Heart right ventricle (tissue), 16 donors: ENCODE measurements at regions of chr3 and their contacts with region 1.

Region 1: DNA sequence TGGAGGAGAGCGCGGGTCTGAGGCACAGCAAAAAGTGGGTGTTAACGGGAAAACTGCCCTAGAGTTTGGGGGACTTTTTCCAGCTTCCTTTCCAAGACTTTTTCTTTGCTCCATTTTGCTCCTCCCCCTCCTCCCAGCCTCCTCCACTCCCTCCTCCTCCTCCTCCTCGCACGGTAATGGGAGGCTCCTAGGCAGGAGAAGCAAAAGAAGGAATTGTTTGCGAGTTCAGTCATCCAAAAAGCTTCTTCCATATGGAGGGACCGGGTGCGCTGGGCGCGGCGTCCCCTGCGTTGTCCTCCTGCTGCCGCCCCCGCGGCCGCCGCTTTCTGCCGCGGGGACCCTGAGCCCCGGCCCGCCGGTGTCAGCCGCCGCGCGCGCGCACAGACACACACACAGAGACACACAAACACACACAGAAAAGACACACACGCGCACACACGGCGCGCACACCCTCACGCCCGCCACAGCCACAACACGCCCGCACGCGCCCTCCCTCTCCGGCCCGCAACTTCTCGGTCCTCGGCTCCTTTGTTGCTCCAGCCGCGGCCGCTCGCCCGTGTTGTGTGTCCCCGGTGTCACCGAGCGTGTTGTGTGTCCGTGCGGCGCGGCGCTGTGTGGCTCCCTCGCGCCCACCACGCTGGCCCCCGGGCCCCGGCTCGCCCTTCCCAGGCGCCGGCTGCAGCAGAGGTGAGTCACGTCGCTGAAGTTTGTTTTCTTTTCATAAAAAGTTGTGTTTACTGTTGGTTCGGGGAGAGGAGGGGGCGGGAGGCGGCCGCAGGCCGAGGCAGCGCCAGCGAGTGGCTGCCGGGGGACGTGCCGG is at the start of gene BOC:
- DNase-seq: peak; percentile 38 to 46
- ATAC-seq: peak; percentile 77 to 89 (median 82)
- H3K4me3 ChIP-seq: peak within 1 kb of the TSS; percentile 38 to 83 (median 70)
- H3K27ac ChIP-seq: peak within 1 kb of the TSS; percentile 77 to 90 (median 86)
- H3K4me1 ChIP-seq: peaks cover 0 to 37% (median 4%) of the 10 kb centered on the region in 9 donors
- H3K27me3 ChIP-seq: peaks cover 0 to 68% (median 30%) of the 10 kb centered on the region in 7 donors
- CTCF ChIP-seq: no peak
- total RNA-seq, gene BOC: 2.9 to 13.9 (median 5.4) TPM

Region 2: GRCh38 chr3:113051302-113051711 is 160.2 kb before region 1 on chr3:
- intact Hi-C with region 1: loop called in 1 of 10 experiments (anchors 5 kb)
- DNase-seq: peak; percentile 60 to 89
- ATAC-seq: peak; percentile 81 to 97 (median 96)
- H3K4me3 ChIP-seq: peak overlapping the region in 1 of 10 donors; percentile 17
- H3K27ac ChIP-seq: no peak overlapping the region
- H3K4me1 ChIP-seq: peaks cover 0 to 32% (median 5%) of the 10 kb centered on the region in 9 donors
- H3K27me3 ChIP-seq: no peaks in the 10 kb centered on the region
- CTCF ChIP-seq: peak; percentile 80 to 98 (median 96)

Region 3: GRCh38 chr3:113136071-113136470 is 75.5 kb before region 1 on chr3:
- intact Hi-C with region 1: loop called in 1 of 10 experiments (anchors 5 kb)
- DNase-seq: no peak
- ATAC-seq: no peak
- H3K4me3 ChIP-seq: no peak overlapping the region
- H3K27ac ChIP-seq: no peak overlapping the region
- H3K4me1 ChIP-seq: peaks cover 0 to 5% (median 0%) of the 10 kb centered on the region in 9 donors
- H3K27me3 ChIP-seq: no peaks in the 10 kb centered on the region
- CTCF ChIP-seq: peak; percentile 22 to 74 (median 59)

Region 4: GRCh38 chr3:113151461-113152031 is 60.0 kb before region 1 on chr3:
- intact Hi-C with region 1: loop called in 2 of 10 experiments (anchors 5 to 10 kb)
- DNase-seq: peak in 1 of 2 donors; percentile 11
- ATAC-seq: peak in 7 of 8 donors; percentile 53 to 63 (median 57)
- H3K4me3 ChIP-seq: no peak overlapping the region
- H3K27ac ChIP-seq: peak overlapping the region in 9 of 10 donors; percentile 23 to 73 (median 55)
- H3K4me1 ChIP-seq: peaks cover 0 to 48% (median 14%) of the 10 kb centered on the region in 9 donors
- H3K27me3 ChIP-seq: no peaks in the 10 kb centered on the region
- CTCF ChIP-seq: no peak

Region 5: DNA sequence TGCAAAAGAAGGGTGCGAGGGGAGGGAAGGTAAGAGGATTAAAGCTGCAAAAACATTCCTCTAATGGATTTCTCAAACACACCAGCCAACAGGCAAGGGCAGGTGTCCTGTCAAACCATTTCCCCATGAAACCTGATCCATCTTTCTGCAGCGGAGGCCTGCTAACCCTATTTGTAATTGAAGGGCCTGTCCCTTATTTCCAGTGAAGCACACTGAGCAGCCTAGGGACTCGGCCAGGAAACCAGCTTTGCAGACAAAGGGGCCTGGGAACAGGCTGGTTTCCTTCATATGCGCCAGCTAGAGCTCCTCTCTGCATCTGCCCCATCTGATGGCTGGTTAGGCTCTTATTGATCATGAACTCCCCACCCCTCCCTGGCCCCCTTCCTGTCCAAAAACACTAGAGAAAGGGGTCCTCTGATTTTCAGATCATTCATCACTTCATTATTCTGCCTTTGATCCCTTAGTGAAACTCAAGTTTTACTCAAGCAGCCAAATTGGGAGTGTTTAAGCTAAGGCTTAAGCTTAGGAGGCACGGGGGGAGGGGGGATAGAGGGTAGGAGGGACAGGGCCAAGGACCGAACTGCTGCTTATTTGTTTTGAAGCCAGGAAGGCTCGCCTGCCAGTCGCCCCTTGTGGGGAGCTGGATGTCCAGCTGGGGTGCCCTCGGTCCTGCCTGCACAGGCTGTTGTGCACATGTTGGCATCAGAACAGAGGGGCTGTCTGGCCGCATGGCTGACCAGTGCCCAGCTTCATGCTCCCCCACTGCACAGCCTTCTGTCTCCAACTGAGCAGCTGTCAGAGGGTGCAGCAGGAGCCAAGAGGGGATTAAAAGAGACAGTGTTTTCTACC is 53.0 kb after region 1 on chr3:
- intact Hi-C with region 1: no loop called
- DNase-seq: no peak
- ATAC-seq: no peak
- H3K4me3 ChIP-seq: no peak overlapping the region
- H3K27ac ChIP-seq: no peak overlapping the region
- H3K4me1 ChIP-seq: peaks cover 0 to 15% (median 7%) of the 10 kb centered on the region in 9 donors
- H3K27me3 ChIP-seq: peaks cover 0 to 4% (median 0%) of the 10 kb centered on the region in 7 donors
- CTCF ChIP-seq: no peak

Region 6: GRCh38 chr3:113287803-113288648 is 76.5 kb after region 1 on chr3:
- intact Hi-C with region 1: loop called in 2 of 10 experiments (anchors 2 to 10 kb)
- DNase-seq: peak in 1 of 2 donors; percentile 70
- ATAC-seq: peak in 7 of 8 donors; percentile 44 to 60 (median 55)
- H3K4me3 ChIP-seq: no peak overlapping the region
- H3K27ac ChIP-seq: peak overlapping the region in 1 of 10 donors; percentile 46
- H3K4me1 ChIP-seq: peaks cover 0 to 6% (median 0%) of the 10 kb centered on the region in 9 donors
- H3K27me3 ChIP-seq: no peaks in the 10 kb centered on the region
- CTCF ChIP-seq: peak; percentile 92 to 100 (median 97)